ENCODE measurements at regions of chr15 and their contacts with region 1.

Region 1: DNA sequence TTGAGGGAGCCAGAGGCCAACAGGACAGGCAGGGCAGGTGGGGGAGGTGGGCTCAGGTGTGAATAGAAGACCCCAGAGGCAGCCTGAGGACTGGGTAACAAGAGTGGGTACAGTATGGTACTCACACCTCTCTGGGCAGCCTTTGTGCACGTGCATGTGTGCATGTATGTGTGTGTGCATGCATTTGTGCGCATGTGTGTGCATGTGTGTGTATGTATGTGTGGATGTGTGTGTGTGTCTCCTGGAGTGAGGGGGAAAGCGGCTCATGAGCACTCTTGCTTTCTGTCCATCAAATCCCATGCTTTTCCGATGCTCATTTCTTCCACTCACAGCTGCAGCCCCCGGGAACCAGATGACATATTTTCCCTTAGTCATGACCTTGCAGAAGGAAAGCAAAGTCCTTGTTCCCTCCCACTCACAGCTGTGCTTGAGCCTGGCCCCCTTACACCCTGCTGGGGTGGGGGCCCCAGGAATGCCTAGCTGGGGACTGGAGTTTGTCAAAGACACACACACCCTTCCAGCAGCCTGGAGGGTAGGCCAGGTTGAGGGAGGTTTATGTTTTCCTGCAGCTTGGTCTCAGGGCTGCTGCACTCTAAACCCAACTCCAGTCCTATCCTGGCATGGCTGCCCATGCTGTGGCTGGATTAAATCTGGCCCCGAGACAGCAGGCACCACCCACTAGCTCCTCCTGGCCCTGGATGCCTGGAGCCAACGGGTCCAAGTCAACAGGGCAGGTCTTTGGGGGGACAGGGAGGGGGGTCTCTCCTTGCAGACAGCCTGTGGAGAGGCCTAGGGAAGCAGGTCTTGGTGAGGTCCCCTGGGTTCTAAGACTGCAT is 22.5 kb downstream of the CCDC33 start:
- DNase-seq: no peak
- H3K4me3 ChIP-seq: no peak overlapping the region
- H3K27ac ChIP-seq: no peak overlapping the region
- H3K4me1 ChIP-seq: peaks cover 5 to 16% (median 12%) of the 10 kb centered on the region in 4 experiments
- H3K27me3 ChIP-seq: peaks cover 0 to 2% (median 0%) of the 10 kb centered on the region in 4 experiments; a peak in 1 of 7 replicates
- CTCF ChIP-seq: no peak
- EP300 ChIP-seq: no peak
- POLR2A ChIP-seq: no peak
- RAD21 ChIP-seq: no peak

Region 2: DNA sequence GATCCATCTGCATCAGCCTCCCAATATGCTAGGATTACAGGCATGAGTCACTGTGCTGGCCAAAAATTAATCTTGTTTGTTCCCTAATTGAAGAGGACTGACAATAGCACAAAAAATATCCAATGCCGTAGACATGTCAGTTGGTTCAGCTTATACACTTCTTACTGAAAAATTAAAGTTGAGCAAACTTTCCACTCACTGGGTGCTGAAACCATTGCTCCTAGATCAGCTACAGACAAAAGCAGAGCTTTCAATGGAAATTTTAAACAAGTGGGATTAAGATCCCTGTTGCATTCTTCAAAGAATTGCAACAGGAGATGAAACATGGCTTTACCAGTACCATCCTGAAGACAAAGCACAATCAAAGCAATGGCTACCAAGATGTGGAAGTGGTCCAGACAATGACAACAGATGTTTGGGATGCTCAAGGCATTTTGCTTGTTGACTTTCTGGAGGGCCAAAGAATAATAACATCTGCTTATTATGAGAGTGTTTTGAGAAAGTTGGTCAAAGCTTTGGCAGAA is 112.3 kb before region 1 on chr15:
- CTCF ChIA-PET with region 1: no interaction called
- POLR2A ChIA-PET with region 1: no interaction called
- DNase-seq: no peak
- H3K4me3 ChIP-seq: no peak overlapping the region
- H3K27ac ChIP-seq: no peak overlapping the region
- H3K4me1 ChIP-seq: peaks cover 0 to 5% (median 2%) of the 10 kb centered on the region in 4 experiments; a peak in 4 of 7 replicates
- H3K27me3 ChIP-seq: no peaks in the 10 kb centered on the region
- CTCF ChIP-seq: no peak
- EP300 ChIP-seq: no peak
- POLR2A ChIP-seq: no peak
- RAD21 ChIP-seq: no peak

Region 3: GRCh38 chr15:74156678-74157411 is 101.8 kb before region 1 on chr15:
- CTCF ChIA-PET with region 1: no interaction called
- POLR2A ChIA-PET with region 1: no interaction called
- DNase-seq: no peak
- H3K4me3 ChIP-seq: no peak overlapping the region
- H3K27ac ChIP-seq: no peak overlapping the region
- H3K4me1 ChIP-seq: peaks cover 0 to 2% (median 0%) of the 10 kb centered on the region in 4 experiments; a peak in 1 of 7 replicates
- H3K27me3 ChIP-seq: no peaks in the 10 kb centered on the region; a peak in 1 of 7 replicates
- CTCF ChIP-seq: no peak
- EP300 ChIP-seq: no peak
- POLR2A ChIP-seq: no peak
- RAD21 ChIP-seq: no peak

Region 4: GRCh38 chr15:74245342-74245931 is 13.2 kb before region 1 on chr15:
- CTCF ChIA-PET with region 1: interaction called, 34 read pairs
- POLR2A ChIA-PET with region 1: interaction called, 11 read pairs
- DNase-seq: no peak
- H3K4me3 ChIP-seq: peak overlapping the region; percentile 3 to 59 (median 18)
- H3K27ac ChIP-seq: no peak overlapping the region
- H3K4me1 ChIP-seq: peaks cover 0 to 19% (median 14%) of the 10 kb centered on the region in 4 experiments; a peak in 6 of 7 replicates
- H3K27me3 ChIP-seq: peaks cover 0 to 7% (median 2%) of the 10 kb centered on the region in 4 experiments; a peak in 3 of 7 replicates
- CTCF ChIP-seq: no peak
- EP300 ChIP-seq: no peak
- POLR2A ChIP-seq: no peak
- RAD21 ChIP-seq: no peak

Region 5: DNA sequence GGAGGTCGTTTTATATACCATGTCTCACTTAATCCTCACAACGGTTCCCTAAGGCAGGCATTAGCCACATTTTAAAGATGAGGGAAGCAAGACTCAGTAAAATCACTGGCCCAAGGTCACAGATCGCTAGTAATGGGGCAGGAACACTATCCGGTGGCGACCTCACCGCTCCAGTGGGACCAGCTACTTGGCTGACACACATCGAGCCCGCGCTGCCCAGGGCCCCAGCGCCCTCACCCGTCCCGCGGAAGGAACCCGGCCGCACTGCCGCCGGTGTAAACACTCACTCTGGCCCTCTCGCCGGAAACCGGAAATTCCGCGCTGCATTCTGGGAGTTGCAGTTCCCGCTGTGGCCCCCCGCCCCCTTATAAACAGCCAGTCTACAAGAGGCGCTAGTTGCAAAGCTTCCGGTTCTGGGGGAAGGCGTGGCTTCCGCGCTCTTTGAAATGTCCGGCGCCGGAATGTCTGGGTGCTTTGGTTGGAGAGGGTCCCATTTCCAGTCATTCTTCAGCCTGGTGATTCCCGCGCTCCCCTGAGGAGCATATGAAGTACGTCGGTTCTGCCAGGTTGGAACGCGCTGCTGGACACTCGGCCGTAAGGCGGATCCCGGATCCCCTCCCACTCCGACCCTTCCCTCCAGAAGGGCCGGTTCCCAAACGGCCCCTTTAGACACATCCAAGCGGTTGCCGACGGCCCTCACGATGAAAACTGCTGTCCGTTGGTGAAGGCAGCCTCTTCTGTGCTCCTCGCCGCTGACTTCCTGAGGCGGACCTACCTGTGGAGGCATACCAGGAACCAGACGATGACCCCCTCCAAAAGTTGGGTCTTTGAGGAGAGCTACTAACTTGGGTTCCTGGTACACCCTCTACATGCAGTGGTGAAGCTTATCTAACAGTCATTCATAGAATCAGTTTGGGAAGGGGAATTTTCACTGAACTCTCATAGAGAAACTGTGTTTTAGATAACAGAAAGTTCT is 202.5 kb after region 1 on chr15 and contains the start of gene UBL7:
- CTCF ChIA-PET with region 1: no interaction called
- POLR2A ChIA-PET with region 1: no interaction called
- DNase-seq: peak; percentile 87 to 98
- H3K4me3 ChIP-seq: peak within 1 kb of the TSS; percentile 79 to 97 (median 85)
- H3K27ac ChIP-seq: peak within 1 kb of the TSS; percentile 58
- H3K4me1 ChIP-seq: no peaks in the 10 kb centered on the region; a peak in 1 of 7 replicates
- H3K27me3 ChIP-seq: no peaks in the 10 kb centered on the region
- CTCF ChIP-seq: peak in 2 of 3 experiments; percentile 19 to 21; a peak in 3 of 4 replicates
- EP300 ChIP-seq: no peak
- POLR2A ChIP-seq: peak; percentile 91 to 98
- RAD21 ChIP-seq: peak; percentile 19 to 33; a peak in 3 of 4 replicates
- total RNA-seq, gene UBL7: 71.5 and 76.7 TPM in 2 replicates